Left ventricle myocardium inferior (tissue), 1 donor: ENCODE measurements at regions of chr20 and their contacts with region 1.

Region 1: DNA sequence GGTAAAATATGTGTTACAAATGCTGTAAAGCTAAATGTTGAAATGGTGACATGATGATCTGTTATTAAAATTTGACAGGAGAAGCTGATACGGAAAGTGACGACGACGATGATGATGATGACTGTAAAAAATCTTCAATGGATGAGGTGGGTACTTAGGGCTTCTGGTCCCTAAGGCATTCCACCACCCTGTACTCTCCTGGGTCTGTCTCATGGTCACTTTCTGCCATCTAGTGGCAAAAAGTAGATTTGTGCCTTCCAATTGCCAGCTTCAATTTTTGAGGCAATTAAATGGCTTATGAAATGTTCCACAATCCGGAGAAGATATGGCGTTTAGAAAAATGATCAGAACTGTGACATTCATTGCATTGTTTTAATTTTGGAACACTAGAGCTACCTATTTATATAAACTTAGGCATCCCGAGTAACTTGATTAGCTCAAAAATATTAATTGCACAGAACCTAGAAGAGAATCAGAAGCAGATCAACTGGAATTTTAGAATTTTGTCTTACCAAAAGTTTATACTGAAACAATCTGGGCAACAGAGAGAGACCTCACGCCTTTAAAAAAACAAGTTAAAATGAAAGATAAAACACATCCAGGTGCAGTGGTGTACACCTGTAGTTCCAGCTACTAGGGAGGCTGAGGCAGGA is 346.5 kb upstream of the PLCB4 start:
- DNase-seq: no peak
- H3K4me3 ChIP-seq: no peak overlapping the region
- H3K27ac ChIP-seq: no peak overlapping the region
- H3K4me1 ChIP-seq: peaks cover 3% of the 10 kb centered on the region
- H3K27me3 ChIP-seq: no peaks in the 10 kb centered on the region
- CTCF ChIP-seq: peak; percentile 86

Region 2: DNA sequence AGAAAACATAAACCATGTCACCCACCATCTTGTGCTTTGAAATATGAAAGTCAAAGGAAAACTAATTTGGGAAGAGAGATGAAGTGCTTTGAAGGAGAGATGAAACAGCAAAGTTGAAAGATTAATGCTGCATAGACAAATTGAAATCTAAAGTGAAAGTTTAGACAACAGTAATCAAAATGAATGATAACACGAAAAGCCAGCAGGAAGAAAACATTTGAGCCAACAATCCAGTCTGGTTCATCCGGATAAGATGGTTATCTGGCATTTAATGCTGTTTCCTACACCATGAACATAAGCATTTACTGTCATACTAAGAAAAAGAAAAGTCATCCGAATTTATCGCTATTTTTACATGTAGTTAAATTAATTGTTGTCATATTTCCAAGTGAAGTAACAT is 782.7 kb before region 1 on chr20:
- intact Hi-C with region 1: loop called (anchors 5 kb)
- DNase-seq: no peak
- H3K4me3 ChIP-seq: no peak overlapping the region
- H3K27ac ChIP-seq: no peak overlapping the region
- H3K4me1 ChIP-seq: peaks cover 3% of the 10 kb centered on the region
- H3K27me3 ChIP-seq: no peaks in the 10 kb centered on the region
- CTCF ChIP-seq: no peak

Region 3: DNA sequence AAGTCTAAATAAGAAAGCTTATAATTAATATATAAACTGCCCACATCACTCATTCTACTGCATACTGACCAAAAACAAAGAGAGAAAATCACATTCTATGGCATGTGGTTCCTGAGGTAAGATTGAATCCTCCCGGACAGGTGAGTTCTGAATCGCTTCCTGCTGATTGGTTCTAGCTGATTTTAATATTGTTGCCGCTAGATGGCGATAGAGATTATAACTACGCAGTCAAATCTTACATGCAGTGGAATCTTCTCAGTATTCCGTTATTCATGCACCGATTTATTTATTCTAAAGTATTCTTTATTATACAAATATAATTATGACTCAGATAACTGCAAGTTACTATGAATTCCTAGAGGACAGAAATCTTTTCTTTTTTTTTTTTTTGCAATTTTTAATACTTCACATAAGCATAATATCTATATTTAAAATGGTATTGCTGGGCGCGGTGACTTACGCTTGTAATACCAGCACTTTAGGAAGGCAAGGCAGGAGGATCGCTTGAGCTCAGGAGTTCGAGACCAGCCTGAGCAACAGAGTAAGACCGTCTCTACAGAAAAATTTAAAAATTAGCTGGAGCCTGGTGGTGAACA is 678.6 kb before region 1 on chr20:
- intact Hi-C with region 1: loop called (anchors 5 kb)
- DNase-seq: no peak
- H3K4me3 ChIP-seq: no peak overlapping the region
- H3K27ac ChIP-seq: no peak overlapping the region
- H3K4me1 ChIP-seq: no peaks in the 10 kb centered on the region
- H3K27me3 ChIP-seq: no peaks in the 10 kb centered on the region
- CTCF ChIP-seq: peak; percentile 78

Region 4: GRCh38 chr20:8131598-8132483 is 590.6 kb before region 1 on chr20 and contains the start of gene PLCB1:
- intact Hi-C with region 1: loop called (anchors 5 kb)
- DNase-seq: peak; percentile 86
- H3K4me3 ChIP-seq: peak within 1 kb of the TSS; percentile 80
- H3K27ac ChIP-seq: peak within 1 kb of the TSS; percentile 87
- H3K4me1 ChIP-seq: peaks cover 37% of the 10 kb centered on the region
- H3K27me3 ChIP-seq: peaks cover 17% of the 10 kb centered on the region
- CTCF ChIP-seq: peak; percentile 88
- total RNA-seq, gene PLCB1: 6.0 TPM

Region 5: GRCh38 chr20:8389381-8390036 is 332.9 kb before region 1 on chr20:
- intact Hi-C with region 1: loop called (anchors 5 kb)
- DNase-seq: no peak
- H3K4me3 ChIP-seq: no peak overlapping the region
- H3K27ac ChIP-seq: peak overlapping the region; percentile 24
- H3K4me1 ChIP-seq: peaks cover 50% of the 10 kb centered on the region
- H3K27me3 ChIP-seq: no peaks in the 10 kb centered on the region
- CTCF ChIP-seq: peak; percentile 64